ENCODE measurements at regions of chr17 and their contacts with region 1.

Region 1: DNA sequence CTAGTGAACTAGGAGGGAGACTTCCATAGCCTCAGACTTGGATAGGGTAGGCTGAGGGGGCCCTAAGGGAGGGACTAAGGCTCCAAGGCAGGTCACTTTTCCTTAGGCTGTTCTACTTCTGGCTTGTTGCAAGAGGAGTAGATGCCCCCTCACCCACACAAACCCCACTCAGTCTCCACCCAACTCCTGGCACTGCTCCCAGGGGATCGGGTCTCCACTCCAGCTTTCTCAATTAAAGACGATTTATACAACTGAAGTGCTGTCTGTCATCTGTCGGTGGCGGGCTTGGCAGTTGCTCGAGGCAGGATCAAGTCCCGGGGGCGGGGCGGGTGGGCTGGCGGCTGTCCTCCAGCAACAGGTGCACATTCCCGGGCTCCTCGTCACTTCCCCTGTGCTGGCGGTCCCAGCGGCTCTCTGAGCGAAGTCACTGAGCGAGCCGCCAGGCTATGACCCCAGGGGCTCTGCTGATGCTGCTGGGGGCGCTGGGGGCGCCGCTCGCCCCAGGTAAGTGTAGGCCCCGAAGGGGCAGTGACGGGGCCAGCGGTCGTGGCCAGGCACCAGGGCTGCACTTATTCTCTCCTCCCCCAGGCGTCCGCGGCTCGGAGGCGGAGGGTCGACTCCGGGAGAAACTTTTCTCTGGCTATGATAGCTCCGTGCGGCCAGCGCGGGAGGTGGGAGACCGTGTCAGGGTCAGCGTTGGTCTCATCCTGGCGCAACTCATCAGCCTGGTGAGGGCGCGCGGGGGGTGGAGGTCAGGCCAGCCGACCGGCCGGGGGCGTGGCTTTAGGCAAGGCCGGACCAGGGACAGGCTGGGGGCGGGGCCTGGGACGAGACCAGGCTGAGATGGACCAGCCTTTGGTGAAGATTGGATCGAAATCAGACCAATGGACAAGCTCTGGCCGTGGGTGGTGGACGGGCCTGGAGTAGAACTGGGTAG is at the start of gene CHRNB1:
- DNase-seq: no peak
- H3K4me3 Mint-ChIP-seq: peak within 1 kb of the TSS; percentile 69
- H3K27ac Mint-ChIP-seq: no peak within 1 kb of the TSS
- H3K4me1 Mint-ChIP-seq: peaks cover 17% of the 10 kb centered on the region
- H3K27me3 Mint-ChIP-seq: peaks cover 52% of the 10 kb centered on the region
- total RNA-seq, gene CHRNB1: 6.6 and 6.9 TPM in 2 replicates

Region 2: DNA sequence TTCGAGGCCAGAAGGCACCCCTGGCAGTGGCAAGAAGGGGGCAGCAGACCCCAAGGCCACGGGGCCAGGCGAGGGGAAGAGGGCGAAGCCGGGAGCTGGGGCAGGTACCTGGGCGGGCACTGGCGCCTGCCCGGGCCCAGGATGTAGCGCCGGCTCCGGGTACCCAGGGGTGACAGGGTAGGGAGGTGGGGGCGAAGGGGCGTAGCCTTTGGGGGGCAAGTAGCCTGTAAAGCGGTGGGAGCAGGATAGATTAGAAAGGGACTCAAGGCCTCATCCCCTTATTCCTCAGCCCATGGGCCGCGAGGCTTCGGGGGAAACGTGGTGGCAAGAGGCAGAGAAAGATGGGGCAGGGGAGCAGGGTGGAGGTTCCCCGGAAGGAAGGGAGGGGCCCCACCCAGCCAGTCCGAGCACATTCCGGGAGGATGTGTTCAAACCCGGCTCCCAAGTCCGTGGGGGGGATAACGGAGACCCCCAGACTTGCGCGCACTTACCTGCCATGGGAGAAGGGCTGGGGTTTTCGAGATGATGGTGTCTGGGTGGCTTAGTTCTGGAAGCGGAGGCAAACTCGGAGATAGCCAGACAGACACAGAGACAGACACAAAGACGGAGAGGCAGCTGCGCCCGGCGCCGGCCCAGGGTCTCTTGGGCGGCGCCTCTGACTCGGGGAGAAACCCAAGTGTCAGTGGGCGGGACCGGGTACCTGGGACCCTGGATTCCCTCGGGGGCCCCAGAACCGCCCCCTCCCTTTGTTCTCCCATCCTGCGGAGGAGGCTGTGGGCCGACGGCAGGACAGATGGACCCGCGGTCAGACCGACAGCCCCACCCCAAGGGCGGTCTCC is 51.1 kb before region 1 on chr17:
- intact Hi-C with region 1: no loop called
- DNase-seq: peak; percentile 28
- H3K4me3 Mint-ChIP-seq: peak overlapping the region; percentile 94
- H3K27ac Mint-ChIP-seq: peak overlapping the region; percentile 83
- H3K4me1 Mint-ChIP-seq: peaks cover 15% of the 10 kb centered on the region
- H3K27me3 Mint-ChIP-seq: no peaks in the 10 kb centered on the region

Region 3: GRCh38 chr17:7454980-7455379 is 10.0 kb after region 1 on chr17:
- intact Hi-C with region 1: loop called (anchors 1 kb)
- DNase-seq: no peak
- H3K4me3 Mint-ChIP-seq: peak overlapping the region; percentile 91
- H3K27ac Mint-ChIP-seq: peak overlapping the region; percentile 93
- H3K4me1 Mint-ChIP-seq: peaks cover 18% of the 10 kb centered on the region
- H3K27me3 Mint-ChIP-seq: no peaks in the 10 kb centered on the region

Measured in activated T-helper 2 cell treated with anti-CD3 and anti-CD28 coated beads, Interferon-gamma antibody, Interleukin-2, Interleukin-4, amounts not matched to agents 10 μg/mL and 5 μg/mL and 100 μg/mL, durations not matched to agents 14 hours and 24 hours and 36 hours (primary cell).